IMR-90 (cell line): ENCODE measurements at regions of chr14 and their contacts with region 1.

Region 1: DNA sequence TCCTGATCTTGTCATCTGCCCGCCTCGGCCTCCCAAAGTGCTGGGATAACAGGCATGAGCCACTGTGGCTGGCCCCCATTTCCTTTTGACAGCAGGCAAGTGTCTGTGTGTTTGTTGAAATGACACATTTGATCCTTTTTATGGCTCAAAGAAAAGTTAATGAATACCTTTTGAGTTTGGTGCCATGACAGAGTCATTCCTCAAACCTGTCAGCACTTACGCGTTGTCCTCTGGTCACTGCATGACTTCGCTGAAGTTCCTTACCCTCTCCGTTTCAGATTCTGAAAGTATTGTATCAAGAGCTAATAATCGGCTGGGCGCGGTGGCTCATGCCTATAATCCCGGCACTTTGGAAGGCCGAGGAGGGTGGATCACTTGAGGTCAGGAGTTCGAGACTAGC is 32.4 kb downstream of the NEMF start:
- DNase-seq: no peak
- ATAC-seq: no peak
- H3K4me3 ChIP-seq: no peak overlapping the region
- H3K27ac ChIP-seq: no peak overlapping the region
- H3K4me1 ChIP-seq: no peaks in the 10 kb centered on the region
- H3K27me3 ChIP-seq: no peaks in the 10 kb centered on the region
- CTCF ChIP-seq: no peak
- POLR2A ChIP-seq: no peak
- RAD21 ChIP-seq: no peak

Region 2: DNA sequence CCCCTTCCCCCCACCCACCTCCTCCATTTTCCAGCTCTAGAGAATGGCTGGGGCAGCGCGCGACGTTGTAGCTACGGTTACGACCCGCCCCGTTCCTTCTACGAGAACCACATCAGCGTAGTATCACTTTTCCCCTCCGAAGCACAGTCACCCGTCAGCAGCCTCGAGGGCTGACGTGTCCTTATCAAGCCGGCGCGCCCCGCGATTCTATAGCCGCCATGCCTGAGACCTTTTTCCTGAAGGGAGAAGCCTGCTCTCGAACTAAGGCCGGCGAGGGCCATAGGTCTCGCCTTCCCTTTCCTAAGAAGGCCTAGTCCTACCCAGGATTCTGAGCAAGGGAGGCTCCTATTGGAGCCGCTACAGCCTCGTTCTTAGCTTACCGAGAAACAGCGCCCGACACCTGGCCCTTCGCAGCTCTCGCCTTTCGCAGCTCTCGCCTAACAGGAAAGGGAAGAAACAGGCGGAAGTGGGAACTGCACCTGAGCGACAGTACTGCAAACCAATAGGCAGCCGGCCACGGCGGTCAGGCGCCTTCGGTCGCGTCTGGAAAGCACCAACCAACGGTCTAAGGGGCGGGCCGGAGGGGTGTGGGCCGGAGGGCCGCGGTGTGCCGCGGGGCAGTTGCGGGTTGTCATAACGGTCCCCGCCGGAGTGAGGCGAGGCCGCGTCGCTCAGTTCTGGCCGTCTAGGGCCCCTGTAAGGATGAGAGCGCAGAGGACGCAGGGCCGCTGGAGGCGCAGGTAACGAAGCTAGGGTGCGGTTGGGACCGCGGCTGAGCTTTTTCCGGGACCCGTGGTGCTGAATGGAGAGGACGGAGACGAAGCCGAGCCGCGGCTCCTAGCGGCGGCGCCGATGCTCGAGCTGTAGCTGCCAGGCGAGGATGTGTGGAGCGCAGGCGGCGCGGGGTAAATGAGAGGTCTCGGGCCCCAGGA is 199.7 kb before region 1 on chr14 and contains the starts of genes MGAT2 and RPL36AL:
- CTCF ChIA-PET with region 1: no interaction called
- POLR2A ChIA-PET with region 1: interaction called, 18 read pairs
- dilution Hi-C with region 1: no loop called
- in situ Hi-C with region 1: no loop called
- intact Hi-C with region 1: no loop called
- DNase-seq: peak; percentile 99
- ATAC-seq: peak; percentile 94
- H3K4me3 ChIP-seq: peak within 1 kb of the TSS; percentile 84
- H3K27ac ChIP-seq: peak within 1 kb of the TSS; percentile 91
- H3K4me1 ChIP-seq: peaks cover 13% of the 10 kb centered on the region
- H3K27me3 ChIP-seq: no peaks in the 10 kb centered on the region
- CTCF ChIP-seq: peak; percentile 29; the same call in 1 of the 2 replicates
- POLR2A ChIP-seq: peak; percentile 97
- RAD21 ChIP-seq: no peak
- total RNA-seq, gene MGAT2: 67.6 and 73.6 TPM in 2 replicates
- total RNA-seq, gene RPL36AL: 129 and 249 TPM in 2 replicates

Region 3: GRCh38 chr14:49670475-49670874 is 149.7 kb before region 1 on chr14:
- CTCF ChIA-PET with region 1: no interaction called
- POLR2A ChIA-PET with region 1: no interaction called
- dilution Hi-C with region 1: no loop called
- in situ Hi-C with region 1: no loop called
- intact Hi-C with region 1: no loop called
- DNase-seq: no peak
- ATAC-seq: no peak
- H3K4me3 ChIP-seq: no peak overlapping the region
- H3K27ac ChIP-seq: no peak overlapping the region
- H3K4me1 ChIP-seq: no peaks in the 10 kb centered on the region
- H3K27me3 ChIP-seq: no peaks in the 10 kb centered on the region
- CTCF ChIP-seq: no peak
- POLR2A ChIP-seq: no peak
- RAD21 ChIP-seq: no peak